Right lobe of liver (tissue), 6 donors: ENCODE measurements at regions of chr16 and their contacts with region 1.

Region 1: DNA sequence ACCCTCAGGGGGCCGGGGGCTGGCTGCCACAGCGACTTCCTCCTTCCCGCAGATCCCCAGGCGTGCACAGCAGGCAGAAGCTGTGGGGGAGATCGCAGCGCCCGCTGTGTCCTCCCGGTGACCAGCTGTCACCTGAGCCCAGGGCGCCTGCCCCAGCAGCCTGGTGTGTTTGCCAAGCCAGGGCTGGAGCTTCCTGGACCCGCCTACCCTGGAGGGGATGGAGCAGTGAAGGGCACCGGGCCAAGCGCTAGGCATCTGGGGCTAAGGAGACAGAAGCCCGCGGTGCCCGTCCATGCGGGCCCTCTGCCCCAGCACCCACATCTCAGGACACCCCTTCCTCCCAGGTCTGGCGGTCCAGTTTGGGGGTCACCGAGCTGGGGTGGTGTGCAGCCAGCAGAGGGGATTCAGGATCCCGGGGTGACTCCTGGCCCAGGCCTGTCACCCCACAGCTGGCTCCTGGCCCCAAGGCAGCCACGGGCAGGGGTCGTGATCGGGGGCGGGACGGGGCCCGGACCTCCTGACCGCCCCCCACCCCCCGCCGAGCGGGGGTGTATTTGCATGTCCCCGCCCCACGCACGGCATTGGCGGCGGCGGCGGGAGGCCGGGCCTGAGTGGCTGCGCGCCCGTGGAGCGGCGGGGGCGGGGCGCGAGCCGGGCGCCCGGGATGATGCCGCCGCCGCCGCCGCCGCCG is at the start of gene RAB26:
- DNase-seq: peak; percentile 94 to 98 (median 96)
- ATAC-seq: peak; percentile 78 to 85 (median 80)
- H3K4me3 ChIP-seq: peak within 1 kb of the TSS; percentile 42 to 61 (median 53)
- H3K27ac ChIP-seq: peak within 1 kb of the TSS; percentile 51 to 71 (median 70)
- H3K4me1 ChIP-seq: peaks cover 0 to 56% (median 23%) of the 10 kb centered on the region in 4 donors
- H3K27me3 ChIP-seq: no peaks in the 10 kb centered on the region
- CTCF ChIP-seq: no peak
- POLR2A ChIP-seq: peak; percentile 69
- total RNA-seq, gene RAB26: 3.8 to 14.6 (median 8.7) TPM

Region 2: GRCh38 chr16:2023098-2023925 is 124.8 kb before region 1 on chr16:
- intact Hi-C with region 1: loop called (anchors 5 kb)
- DNase-seq: peak; percentile 94 to 96 (median 95)
- ATAC-seq: peak; percentile 85 to 95 (median 88)
- H3K4me3 ChIP-seq: peak overlapping the region in 1 of 3 donors; percentile 22
- H3K27ac ChIP-seq: peak overlapping the region; percentile 2 to 38 (median 26)
- H3K4me1 ChIP-seq: peaks cover 0 to 35% (median 14%) of the 10 kb centered on the region in 4 donors
- H3K27me3 ChIP-seq: no peaks in the 10 kb centered on the region
- CTCF ChIP-seq: peak; percentile 89 to 99 (median 94)
- POLR2A ChIP-seq: peak; percentile 43

Region 3: GRCh38 chr16:2035431-2036220 is 112.5 kb before region 1 on chr16:
- intact Hi-C with region 1: loop called in 1 of 2 experiments (anchors 5 kb)
- DNase-seq: peak; percentile 85 to 92 (median 91)
- ATAC-seq: peak; percentile 29 to 50 (median 44)
- H3K4me3 ChIP-seq: peak overlapping the region; percentile 39 to 81 (median 74)
- H3K27ac ChIP-seq: peak overlapping the region; percentile 86 to 96 (median 87)
- H3K4me1 ChIP-seq: peaks cover 0 to 50% (median 17%) of the 10 kb centered on the region in 4 donors
- H3K27me3 ChIP-seq: no peaks in the 10 kb centered on the region
- CTCF ChIP-seq: peak in 1 of 4 donors; percentile 12
- POLR2A ChIP-seq: peak; percentile 76

Region 4: GRCh38 chr16:2056681-2057407 is 91.3 kb before region 1 on chr16:
- intact Hi-C with region 1: no loop called
- DNase-seq: peak in 1 of 3 donors; percentile 68
- ATAC-seq: peak; percentile 37 to 67 (median 47)
- H3K4me3 ChIP-seq: no peak overlapping the region
- H3K27ac ChIP-seq: no peak overlapping the region
- H3K4me1 ChIP-seq: no peaks in the 10 kb centered on the region
- H3K27me3 ChIP-seq: no peaks in the 10 kb centered on the region
- CTCF ChIP-seq: peak in 3 of 4 donors; percentile 29 to 44 (median 44)
- POLR2A ChIP-seq: no peak

Region 5: GRCh38 chr16:2082160-2082982 is 65.8 kb before region 1 on chr16:
- intact Hi-C with region 1: no loop called
- DNase-seq: peak; percentile 87 to 95 (median 92)
- ATAC-seq: peak; percentile 76 to 92 (median 91)
- H3K4me3 ChIP-seq: no peak overlapping the region
- H3K27ac ChIP-seq: peak overlapping the region; percentile 31 to 55 (median 43)
- H3K4me1 ChIP-seq: peaks cover 0 to 32% (median 9%) of the 10 kb centered on the region in 4 donors
- H3K27me3 ChIP-seq: no peaks in the 10 kb centered on the region
- CTCF ChIP-seq: peak; percentile 10 to 47 (median 30)
- POLR2A ChIP-seq: peak; percentile 27